ENCODE measurements at regions of chr1 and their contacts with region 1.

Region 1: DNA sequence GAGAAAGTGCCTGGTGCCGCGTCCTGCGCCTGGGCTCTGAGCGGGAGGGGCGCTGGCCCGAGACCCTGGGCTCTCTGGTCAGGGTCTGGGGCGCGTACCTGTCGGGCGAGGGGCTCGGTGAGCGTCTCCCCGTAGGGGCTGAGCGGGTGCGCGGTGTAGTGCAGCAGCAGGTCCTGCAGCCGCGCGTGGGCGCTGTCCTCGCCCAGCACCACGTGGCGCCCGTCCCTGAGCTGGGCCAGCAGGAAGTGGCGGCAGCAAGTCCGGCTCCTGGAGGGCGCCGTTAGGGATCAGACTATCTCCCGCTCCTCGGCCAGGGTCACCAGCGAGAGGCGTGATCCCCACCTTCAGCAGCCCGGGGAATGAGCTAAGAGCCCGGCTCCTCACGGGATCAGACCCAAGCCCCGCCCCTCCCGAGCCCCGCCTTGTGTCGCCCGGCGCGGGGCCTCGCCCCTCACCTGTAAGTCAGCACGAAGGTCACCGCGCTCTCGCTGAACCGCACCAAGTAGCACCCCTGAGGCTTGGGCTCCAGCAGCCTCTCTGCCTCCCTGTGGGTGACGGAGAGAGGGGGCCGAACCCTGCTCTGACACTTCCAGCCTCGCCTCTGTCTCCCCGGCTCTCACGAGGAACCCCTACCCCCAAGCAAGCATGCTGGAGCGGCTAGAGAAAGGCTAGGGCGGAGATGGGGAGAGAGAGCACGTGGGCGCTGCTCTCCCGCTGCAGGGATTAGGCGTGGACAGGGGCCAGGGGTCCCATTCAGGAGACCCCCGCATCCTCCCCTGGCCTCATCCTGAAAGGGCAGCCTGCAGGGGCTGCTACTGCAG is 2.7 kb downstream of the SH2D2A start:
- DNase-seq: peak; percentile 79 to 91 (median 83)
- H3K4me3 ChIP-seq: peak overlapping the region; percentile 73 to 97
- H3K4me3 Mint-ChIP-seq: peak overlapping the region; percentile 92 to 95 (median 94)
- H3K27ac ChIP-seq: peak overlapping the region; percentile 100
- H3K27ac Mint-ChIP-seq: peak overlapping the region; percentile 99 to 100 (median 100)
- H3K4me1 ChIP-seq: peaks cover 80% of the 10 kb centered on the region
- H3K4me1 Mint-ChIP-seq: peaks cover 47 to 78% (median 63%) of the 10 kb centered on the region in 4 donors
- H3K27me3 ChIP-seq: no peaks in the 10 kb centered on the region
- H3K27me3 Mint-ChIP-seq: peaks cover 0 to 5% of the 10 kb centered on the region in 2 donors

Region 2: GRCh38 chr1:156740679-156741612 is 73.0 kb before region 1 on chr1 and contains the start of gene MRPL24:
- CTCF ChIA-PET with region 1: no interaction called
- POLR2A ChIA-PET with region 1: interaction called, 8 read pairs
- intact Hi-C with region 1: loop called (anchors 5 kb)
- DNase-seq: peak; percentile 96 to 100 (median 99)
- H3K4me3 ChIP-seq: peak within 1 kb of the TSS; percentile 83 to 89
- H3K4me3 Mint-ChIP-seq: peak within 1 kb of the TSS; percentile 94 to 99 (median 96)
- H3K27ac ChIP-seq: peak within 1 kb of the TSS; percentile 84
- H3K27ac Mint-ChIP-seq: peak within 1 kb of the TSS; percentile 91 to 100 (median 98)
- H3K4me1 ChIP-seq: peaks cover 25% of the 10 kb centered on the region
- H3K4me1 Mint-ChIP-seq: peaks cover 18 to 45% (median 32%) of the 10 kb centered on the region in 4 donors
- H3K27me3 ChIP-seq: no peaks in the 10 kb centered on the region
- H3K27me3 Mint-ChIP-seq: no peaks in the 10 kb centered on the region
- total RNA-seq, gene MRPL24: 44.1 to 47.4 TPM

Region 3: GRCh38 chr1:156751758-156752757 is 61.9 kb before region 1 on chr1:
- CTCF ChIA-PET with region 1: no interaction called
- POLR2A ChIA-PET with region 1: interaction called, 13 read pairs
- intact Hi-C with region 1: no loop called
- DNase-seq: peak; percentile 91 to 98 (median 93)
- H3K4me3 ChIP-seq: peak overlapping the region; percentile 42 to 88
- H3K4me3 Mint-ChIP-seq: peak overlapping the region; percentile 87 to 97 (median 92)
- H3K27ac ChIP-seq: peak overlapping the region; percentile 82
- H3K27ac Mint-ChIP-seq: peak overlapping the region; percentile 84 to 95 (median 92)
- H3K4me1 ChIP-seq: peaks cover 43% of the 10 kb centered on the region
- H3K4me1 Mint-ChIP-seq: peaks cover 36 to 61% (median 46%) of the 10 kb centered on the region in 4 donors
- H3K27me3 ChIP-seq: no peaks in the 10 kb centered on the region
- H3K27me3 Mint-ChIP-seq: no peaks in the 10 kb centered on the region

Region 4: GRCh38 chr1:156767101-156767878 is 46.7 kb before region 1 on chr1 and contains the start of gene PRCC:
- CTCF ChIA-PET with region 1: interaction called, 4 read pairs
- POLR2A ChIA-PET with region 1: interaction called, 6 read pairs
- intact Hi-C with region 1: loop called (anchors 1 kb)
- DNase-seq: peak; percentile 97 to 100 (median 99)
- H3K4me3 ChIP-seq: peak within 1 kb of the TSS; percentile 98 to 99
- H3K4me3 Mint-ChIP-seq: no peak within 1 kb of the TSS
- H3K27ac ChIP-seq: peak within 1 kb of the TSS; percentile 98
- H3K27ac Mint-ChIP-seq: no peak within 1 kb of the TSS
- H3K4me1 ChIP-seq: peaks cover 48% of the 10 kb centered on the region
- H3K4me1 Mint-ChIP-seq: peaks cover 24 to 39% (median 34%) of the 10 kb centered on the region in 4 donors
- H3K27me3 ChIP-seq: no peaks in the 10 kb centered on the region
- H3K27me3 Mint-ChIP-seq: no peaks in the 10 kb centered on the region
- total RNA-seq, gene PRCC: 60.9 to 61.3 TPM

Region 5: GRCh38 chr1:156797212-156797871 is 16.6 kb before region 1 on chr1:
- CTCF ChIA-PET with region 1: interaction called, 42 read pairs
- POLR2A ChIA-PET with region 1: interaction called, 22 read pairs
- intact Hi-C with region 1: loop called (anchors 1 kb)
- DNase-seq: peak; percentile 66 to 75 (median 74)
- H3K4me3 ChIP-seq: no peak overlapping the region
- H3K4me3 Mint-ChIP-seq: no peak overlapping the region
- H3K27ac ChIP-seq: no peak overlapping the region
- H3K27ac Mint-ChIP-seq: peak overlapping the region in 6 of 7 donors; percentile 12 to 45 (median 24)
- H3K4me1 ChIP-seq: peaks cover 17% of the 10 kb centered on the region
- H3K4me1 Mint-ChIP-seq: peaks cover 18 to 30% (median 21%) of the 10 kb centered on the region in 4 donors
- H3K27me3 ChIP-seq: no peaks in the 10 kb centered on the region
- H3K27me3 Mint-ChIP-seq: no peaks in the 10 kb centered on the region

Region 6: DNA sequence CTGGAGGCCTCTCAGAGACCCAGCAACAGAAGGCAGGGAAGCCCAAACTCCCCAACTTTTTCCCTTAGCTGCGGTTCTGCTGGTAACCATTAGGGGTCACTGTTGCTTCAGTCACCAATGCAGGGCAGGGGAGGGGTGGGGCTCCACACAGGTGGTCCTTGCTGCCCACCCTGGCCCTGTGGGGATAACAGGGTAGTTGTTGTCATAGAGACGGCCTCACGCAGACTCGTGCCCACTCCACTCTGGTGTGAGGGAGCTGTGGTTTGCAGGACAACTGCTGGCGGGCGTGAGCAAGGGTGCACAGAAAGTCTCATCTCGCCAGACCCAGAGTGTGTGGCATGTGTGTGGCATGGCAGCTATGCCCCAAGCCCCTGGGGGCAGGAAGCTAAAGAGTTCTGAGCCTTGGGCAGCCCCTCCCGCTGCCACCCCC is 25.0 kb after region 1 on chr1:
- CTCF ChIA-PET with region 1: interaction called, 21 read pairs
- POLR2A ChIA-PET with region 1: interaction called, 5 read pairs
- intact Hi-C with region 1: loop called (anchors 2 kb)
- DNase-seq: peak in 4 of 5 donors; percentile 52 to 66 (median 55)
- H3K4me3 ChIP-seq: no peak overlapping the region
- H3K4me3 Mint-ChIP-seq: no peak overlapping the region
- H3K27ac ChIP-seq: no peak overlapping the region
- H3K27ac Mint-ChIP-seq: peak overlapping the region in 6 of 7 donors; percentile 5 to 81 (median 54)
- H3K4me1 ChIP-seq: peaks cover 12% of the 10 kb centered on the region
- H3K4me1 Mint-ChIP-seq: peaks cover 4 to 24% (median 10%) of the 10 kb centered on the region in 4 donors
- H3K27me3 ChIP-seq: peaks cover 11% of the 10 kb centered on the region
- H3K27me3 Mint-ChIP-seq: peaks cover 16 to 45% of the 10 kb centered on the region in 2 donors

Measured in CD4-positive, alpha-beta memory T cell (primary cell).